Heart left ventricle (tissue), 16 donors: ENCODE measurements at regions of chr9 and their contacts with region 1.

Region 1: GRCh38 chr9:77456829-77457437 is 191.2 kb downstream of the GNA14 start:
- DNase-seq: peak; percentile 64 to 85 (median 80)
- ATAC-seq: peak; percentile 32 to 88 (median 82)
- H3K4me3 ChIP-seq: no peak overlapping the region
- H3K27ac ChIP-seq: no peak overlapping the region
- H3K4me1 ChIP-seq: peaks cover 0 to 17% (median 1%) of the 10 kb centered on the region in 12 donors
- H3K27me3 ChIP-seq: no peaks in the 10 kb centered on the region
- CTCF ChIP-seq: peak; percentile 78 to 95 (median 84)
- POLR2A ChIP-seq: no peak

Region 2: DNA sequence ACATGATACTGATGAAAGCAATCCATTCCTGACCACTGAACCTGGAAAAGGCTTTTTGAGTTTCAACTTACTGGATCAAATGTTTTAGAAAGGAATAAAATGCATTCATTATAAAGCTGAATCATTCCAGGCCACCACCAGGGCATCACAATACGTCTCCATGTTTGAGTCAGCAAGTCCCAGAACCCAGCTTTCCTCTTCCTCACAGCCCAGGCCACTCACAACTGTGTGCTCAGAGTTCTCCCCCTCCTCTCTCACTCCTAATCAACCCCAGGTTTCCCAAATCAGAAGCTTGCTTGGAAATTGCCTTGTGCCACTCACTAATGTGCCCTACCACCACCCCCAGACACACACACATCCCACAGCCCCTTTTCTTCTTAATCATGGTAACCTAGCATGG is 99.5 kb after region 1 on chr9:
- intact Hi-C with region 1: no loop called
- DNase-seq: no peak
- ATAC-seq: no peak
- H3K4me3 ChIP-seq: no peak overlapping the region
- H3K27ac ChIP-seq: no peak overlapping the region
- H3K4me1 ChIP-seq: peaks cover 0 to 8% (median 0%) of the 10 kb centered on the region in 12 donors
- H3K27me3 ChIP-seq: no peaks in the 10 kb centered on the region
- CTCF ChIP-seq: no peak
- POLR2A ChIP-seq: no peak

Region 3: GRCh38 chr9:77673941-77674791 is 217.2 kb after region 1 on chr9:
- intact Hi-C with region 1: no loop called
- DNase-seq: no peak
- ATAC-seq: peak in 3 of 4 donors; percentile 47 to 66 (median 54)
- H3K4me3 ChIP-seq: no peak overlapping the region
- H3K27ac ChIP-seq: peak overlapping the region in 6 of 12 donors; percentile 31 to 75 (median 60)
- H3K4me1 ChIP-seq: peaks cover 0 to 7% (median 0%) of the 10 kb centered on the region in 12 donors
- H3K27me3 ChIP-seq: no peaks in the 10 kb centered on the region
- CTCF ChIP-seq: peak in 1 of 12 donors; percentile 2
- POLR2A ChIP-seq: no peak

Region 4: GRCh38 chr9:77743386-77743785 is 286.5 kb after region 1 on chr9:
- intact Hi-C with region 1: loop called in 3 of 10 experiments (anchors 5 to 10 kb)
- DNase-seq: no peak
- ATAC-seq: no peak
- H3K4me3 ChIP-seq: no peak overlapping the region
- H3K27ac ChIP-seq: peak overlapping the region in 1 of 12 donors; percentile 11
- H3K4me1 ChIP-seq: peaks cover 0 to 24% (median 3%) of the 10 kb centered on the region in 12 donors
- H3K27me3 ChIP-seq: no peaks in the 10 kb centered on the region
- CTCF ChIP-seq: no peak
- POLR2A ChIP-seq: no peak

Region 5: GRCh38 chr9:77751341-77752091 is 294.6 kb after region 1 on chr9:
- intact Hi-C with region 1: loop called in 8 of 10 experiments (anchors 1 to 10 kb)
- DNase-seq: peak in 2 of 5 donors; percentile 30 to 36
- ATAC-seq: peak in 3 of 4 donors; percentile 60 to 80 (median 76)
- H3K4me3 ChIP-seq: no peak overlapping the region
- H3K27ac ChIP-seq: peak overlapping the region in 2 of 12 donors; percentile 24 to 61
- H3K4me1 ChIP-seq: peaks cover 0 to 14% (median 6%) of the 10 kb centered on the region in 12 donors
- H3K27me3 ChIP-seq: no peaks in the 10 kb centered on the region
- CTCF ChIP-seq: peak; percentile 35 to 67 (median 52)
- POLR2A ChIP-seq: no peak

Region 6: DNA sequence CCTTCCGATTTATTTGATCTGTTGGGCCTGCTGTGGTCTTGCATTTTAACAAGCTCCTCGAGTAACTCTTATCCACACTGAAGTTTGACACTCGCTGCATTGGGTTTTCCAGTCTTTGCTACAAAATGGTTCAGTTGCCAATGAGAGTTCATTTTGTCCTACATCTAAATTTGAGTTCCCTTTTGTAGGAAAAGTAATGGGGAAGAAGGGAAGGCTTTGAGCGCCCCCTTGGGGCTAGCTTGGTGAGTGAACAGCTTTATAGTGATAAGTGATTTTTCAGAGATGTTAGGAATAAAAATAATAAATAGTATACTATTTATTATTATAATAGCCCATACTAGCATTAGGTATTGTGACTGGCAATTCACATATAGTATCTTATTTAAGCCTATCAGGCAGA is 664.6 kb after region 1 on chr9:
- intact Hi-C with region 1: loop called in 2 of 10 experiments (anchors 10 kb)
- DNase-seq: peak; percentile 38 to 70 (median 48)
- ATAC-seq: no peak
- H3K4me3 ChIP-seq: no peak overlapping the region
- H3K27ac ChIP-seq: no peak overlapping the region
- H3K4me1 ChIP-seq: peaks cover 0 to 17% (median 0%) of the 10 kb centered on the region in 12 donors
- H3K27me3 ChIP-seq: no peaks in the 10 kb centered on the region
- CTCF ChIP-seq: peak; percentile 28 to 82 (median 56)
- POLR2A ChIP-seq: no peak